ENCODE measurements at regions of chr5 and their contacts with region 1.

Region 1: GRCh38 chr5:38640996-38641395 is 84.5 kb upstream of the LIFR start:
- DNase-seq: no peak
- H3K4me3 ChIP-seq: no peak overlapping the region
- H3K27ac ChIP-seq: no peak overlapping the region
- H3K4me1 ChIP-seq: peaks cover 13% of the 10 kb centered on the region
- H3K27me3 ChIP-seq: no peaks in the 10 kb centered on the region
- CTCF ChIP-seq: no peak

Region 2: DNA sequence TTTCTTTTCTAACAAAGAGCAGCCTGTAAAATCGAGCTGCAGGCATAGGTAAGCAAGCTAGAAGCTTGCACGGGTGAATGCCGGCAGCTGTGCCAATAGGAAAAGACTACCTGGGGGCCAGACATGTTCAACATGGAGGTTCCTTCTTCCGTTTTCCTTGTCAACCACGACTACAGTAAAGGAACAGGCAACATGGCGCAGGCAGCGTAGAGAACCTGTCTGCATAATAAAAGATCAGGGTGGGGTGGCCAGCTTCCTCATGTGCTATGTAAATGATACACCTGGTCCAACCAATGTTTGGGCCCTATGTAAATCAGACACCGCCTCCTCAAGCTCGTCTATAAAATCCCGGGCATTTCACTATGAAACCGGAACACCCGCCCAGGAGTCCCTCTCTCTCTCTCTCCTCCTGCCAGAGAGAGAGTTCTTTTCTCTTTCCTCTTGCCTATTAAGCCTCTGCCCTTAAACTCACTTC is 19.2 kb after region 1 on chr5:
- CTCF ChIA-PET with region 1: no interaction called
- POLR2A ChIA-PET with region 1: interaction called, 11 read pairs
- intact Hi-C with region 1: no loop called
- DNase-seq: peak; percentile 82 to 88
- H3K4me3 ChIP-seq: peak overlapping the region; percentile 57; the same call in 1 of the 2 replicates
- H3K27ac ChIP-seq: peak overlapping the region; percentile 40
- H3K4me1 ChIP-seq: no peaks in the 10 kb centered on the region
- H3K27me3 ChIP-seq: no peaks in the 10 kb centered on the region
- CTCF ChIP-seq: no peak

Measured in PC-9 (cell line).